ENCODE measurements at regions of chr1 and their contacts with region 1.

Region 1: DNA sequence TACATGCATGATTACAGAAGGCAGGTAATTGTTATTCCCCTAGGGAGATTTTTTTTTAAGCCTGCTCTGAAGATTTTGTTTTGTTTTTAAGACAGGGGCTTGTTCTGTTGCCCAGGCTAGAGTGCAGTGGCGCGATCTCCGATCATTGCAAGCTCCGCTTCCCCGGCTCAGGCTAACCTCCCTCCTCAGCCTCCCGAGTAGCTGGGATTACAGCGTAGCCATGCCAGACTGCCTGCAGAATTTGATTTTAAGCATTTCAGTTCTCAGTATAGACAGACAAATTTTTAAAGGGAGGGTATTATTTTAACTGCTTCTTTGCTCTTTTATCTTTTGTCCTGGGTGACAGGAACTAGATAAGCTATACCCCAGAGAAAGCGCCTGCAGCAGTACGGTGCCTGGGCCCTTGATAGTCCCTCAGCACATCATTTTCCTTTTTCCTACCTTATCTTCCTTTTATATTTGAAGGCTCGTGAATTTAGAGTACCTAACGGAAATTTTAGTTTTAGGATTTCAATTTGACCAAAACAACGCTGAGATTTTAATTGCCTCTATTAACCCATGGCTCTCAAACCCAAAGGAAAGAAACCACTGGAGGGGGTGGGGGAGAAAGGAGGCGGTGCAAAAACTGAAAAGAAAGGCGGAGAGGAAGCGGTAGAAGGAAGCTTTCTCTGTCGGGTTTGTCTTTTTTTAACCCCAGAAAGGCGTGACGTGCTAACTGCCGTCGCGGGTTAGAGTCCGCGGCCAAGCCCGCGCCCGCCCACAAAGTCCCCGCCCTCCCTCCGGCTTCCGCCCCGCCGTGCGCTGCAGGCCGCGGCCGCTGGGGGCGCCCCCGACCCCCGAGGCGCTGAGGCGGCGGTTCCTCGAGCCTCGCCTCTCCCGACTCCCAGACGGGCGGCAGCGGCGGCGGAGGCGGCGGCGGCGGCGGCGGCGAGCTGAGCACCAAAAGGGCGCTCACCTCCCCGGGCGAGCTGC is at the start of gene EEIG2:
- DNase-seq: peak; percentile 84 to 94 (median 91)
- ATAC-seq: peak; percentile 94
- H3K4me3 ChIP-seq: peak within 1 kb of the TSS; percentile 65
- H3K4me3 Mint-ChIP-seq: peak within 1 kb of the TSS in 9 of 10 donors; percentile 93 to 99 (median 96)
- H3K27ac ChIP-seq: peak within 1 kb of the TSS; percentile 68
- H3K27ac Mint-ChIP-seq: peak within 1 kb of the TSS; percentile 84 to 96 (median 91)
- H3K4me1 ChIP-seq: peaks cover 21 to 31% of the 10 kb centered on the region in 2 donors
- H3K4me1 Mint-ChIP-seq: peaks cover 22 to 38% (median 33%) of the 10 kb centered on the region in 7 donors
- H3K27me3 ChIP-seq: no peaks in the 10 kb centered on the region
- H3K27me3 Mint-ChIP-seq: peaks cover 0 to 10% (median 0%) of the 10 kb centered on the region in 5 donors
- total RNA-seq, gene EEIG2: 7.8 to 15.9 (median 10.9) TPM

Region 2: DNA sequence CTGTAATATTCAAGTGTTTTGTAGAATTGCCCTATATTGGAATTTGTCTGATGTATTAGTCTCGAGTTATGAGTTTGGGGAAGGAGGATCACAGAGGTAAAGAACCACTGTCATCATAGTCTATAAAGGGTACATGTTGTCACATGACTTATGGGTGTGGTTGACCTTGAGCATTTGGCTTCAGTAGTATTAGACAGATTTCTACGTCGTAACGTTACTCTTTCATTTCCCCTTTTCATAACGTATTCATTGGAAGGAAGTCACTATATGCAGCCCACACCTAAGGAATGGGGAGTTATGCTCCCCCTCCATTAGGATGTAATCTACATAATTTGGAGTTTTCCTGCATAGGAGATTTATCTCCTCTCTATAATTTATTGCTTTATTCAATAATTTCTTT is 484.4 kb before region 1 on chr1:
- CTCF ChIA-PET with region 1: no interaction called
- POLR2A ChIA-PET with region 1: no interaction called
- intact Hi-C with region 1: loop called in 1 of 2 experiments (anchors 5 kb)
- DNase-seq: no peak
- ATAC-seq: peak; percentile 58
- H3K4me3 ChIP-seq: no peak overlapping the region
- H3K4me3 Mint-ChIP-seq: no peak overlapping the region
- H3K27ac ChIP-seq: no peak overlapping the region
- H3K27ac Mint-ChIP-seq: peak overlapping the region in 2 of 9 donors; percentile 21 to 78
- H3K4me1 ChIP-seq: peaks cover 28 to 37% of the 10 kb centered on the region in 2 donors
- H3K4me1 Mint-ChIP-seq: peaks cover 24 to 60% (median 47%) of the 10 kb centered on the region in 7 donors
- H3K27me3 ChIP-seq: no peaks in the 10 kb centered on the region
- H3K27me3 Mint-ChIP-seq: no peaks in the 10 kb centered on the region

Region 3: GRCh38 chr1:108512239-108512981 is 47.1 kb before region 1 on chr1:
- CTCF ChIA-PET with region 1: interaction called, 99 read pairs
- POLR2A ChIA-PET with region 1: interaction called, 11 read pairs
- intact Hi-C with region 1: loop called (anchors 1 kb)
- DNase-seq: peak in 6 of 9 donors; percentile 27 to 58 (median 50)
- ATAC-seq: peak; percentile 85
- H3K4me3 ChIP-seq: no peak overlapping the region
- H3K4me3 Mint-ChIP-seq: no peak overlapping the region
- H3K27ac ChIP-seq: no peak overlapping the region
- H3K27ac Mint-ChIP-seq: no peak overlapping the region
- H3K4me1 ChIP-seq: no peaks in the 10 kb centered on the region
- H3K4me1 Mint-ChIP-seq: no peaks in the 10 kb centered on the region
- H3K27me3 ChIP-seq: no peaks in the 10 kb centered on the region
- H3K27me3 Mint-ChIP-seq: peaks cover 4 to 64% (median 12%) of the 10 kb centered on the region in 5 donors

Region 4: GRCh38 chr1:108643492-108644335 is 84.2 kb after region 1 on chr1:
- CTCF ChIA-PET with region 1: interaction called, 64 read pairs
- POLR2A ChIA-PET with region 1: interaction called, 53 read pairs
- intact Hi-C with region 1: loop called (anchors 1 kb)
- DNase-seq: peak in 7 of 9 donors; percentile 59 to 78 (median 67)
- ATAC-seq: peak; percentile 45
- H3K4me3 ChIP-seq: no peak overlapping the region
- H3K4me3 Mint-ChIP-seq: peak overlapping the region in 9 of 10 donors; percentile 4 to 70 (median 47)
- H3K27ac ChIP-seq: peak overlapping the region; percentile 71
- H3K27ac Mint-ChIP-seq: peak overlapping the region; percentile 68 to 100 (median 98)
- H3K4me1 ChIP-seq: peaks cover 49 to 52% of the 10 kb centered on the region in 2 donors
- H3K4me1 Mint-ChIP-seq: peaks cover 55 to 81% (median 75%) of the 10 kb centered on the region in 7 donors
- H3K27me3 ChIP-seq: no peaks in the 10 kb centered on the region
- H3K27me3 Mint-ChIP-seq: no peaks in the 10 kb centered on the region

Region 5: GRCh38 chr1:108746372-108747205 is 187.1 kb after region 1 on chr1 and contains the start of gene STXBP3:
- CTCF ChIA-PET with region 1: no interaction called
- POLR2A ChIA-PET with region 1: no interaction called
- intact Hi-C with region 1: loop called (anchors 1 to 2 kb)
- DNase-seq: peak; percentile 98 to 100 (median 99)
- ATAC-seq: peak; percentile 97
- H3K4me3 ChIP-seq: peak within 1 kb of the TSS; percentile 76
- H3K4me3 Mint-ChIP-seq: peak within 1 kb of the TSS; percentile 90 to 100 (median 97)
- H3K27ac ChIP-seq: peak within 1 kb of the TSS; percentile 98
- H3K27ac Mint-ChIP-seq: peak within 1 kb of the TSS; percentile 93 to 100 (median 98)
- H3K4me1 ChIP-seq: peaks cover 3 to 6% of the 10 kb centered on the region in 2 donors
- H3K4me1 Mint-ChIP-seq: peaks cover 26 to 47% (median 41%) of the 10 kb centered on the region in 7 donors
- H3K27me3 ChIP-seq: no peaks in the 10 kb centered on the region
- H3K27me3 Mint-ChIP-seq: peaks cover 0 to 5% (median 0%) of the 10 kb centered on the region in 5 donors
- total RNA-seq, gene STXBP3: 46.8 to 75.2 (median 54.0) TPM

Region 6: DNA sequence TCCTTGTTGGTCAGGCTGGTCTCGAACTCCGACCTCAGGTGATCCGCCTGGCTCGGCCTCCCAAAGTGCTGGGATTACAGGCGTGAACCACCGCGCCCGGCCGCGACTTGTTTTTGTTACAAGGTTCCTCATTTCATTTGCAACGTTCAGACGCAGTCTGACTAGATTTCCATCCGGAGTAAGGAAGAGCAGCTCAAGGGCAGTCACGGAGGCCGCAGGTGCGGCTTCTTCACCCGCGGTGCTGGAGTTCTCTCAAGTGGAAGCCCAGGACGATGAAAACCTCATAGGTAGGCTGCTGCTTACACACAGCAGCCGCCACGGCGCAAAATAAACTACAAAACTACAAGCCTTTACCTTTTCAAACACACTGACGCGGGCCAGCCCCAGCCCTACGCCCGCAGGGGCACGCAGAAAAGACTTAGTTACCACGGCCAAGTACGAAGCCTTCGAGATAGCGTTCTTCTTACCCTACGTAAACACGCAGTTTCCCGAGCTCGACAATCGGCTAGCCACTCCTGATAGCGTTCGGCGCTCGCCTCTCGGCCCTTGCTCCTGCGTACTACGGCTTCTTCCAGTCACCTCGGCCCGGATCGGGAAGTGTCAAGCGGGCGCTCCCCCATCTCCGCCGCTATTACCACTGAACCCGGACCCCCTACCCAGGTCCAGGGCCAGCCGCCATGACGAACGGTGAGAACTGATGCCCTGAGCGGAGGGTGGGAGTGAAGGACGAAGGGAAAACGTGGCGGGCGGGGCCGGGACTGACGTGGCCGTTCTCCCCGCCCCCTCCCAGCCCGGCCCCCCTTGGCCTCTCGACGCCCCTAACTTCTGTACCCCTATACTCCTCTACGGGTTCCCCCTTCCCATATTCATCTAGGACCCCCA is 530.9 kb after region 1 on chr1 and contains the start of gene TMEM167B:
- CTCF ChIA-PET with region 1: no interaction called
- POLR2A ChIA-PET with region 1: interaction called, 7 read pairs
- intact Hi-C with region 1: loop called in 1 of 2 experiments (anchors 5 kb)
- DNase-seq: peak; percentile 71 to 92 (median 87)
- ATAC-seq: peak; percentile 98
- H3K4me3 ChIP-seq: peak within 1 kb of the TSS; percentile 84
- H3K4me3 Mint-ChIP-seq: peak within 1 kb of the TSS; percentile 88 to 98 (median 96)
- H3K27ac ChIP-seq: peak within 1 kb of the TSS; percentile 97
- H3K27ac Mint-ChIP-seq: peak within 1 kb of the TSS; percentile 90 to 99 (median 98)
- H3K4me1 ChIP-seq: peaks cover 14 to 18% of the 10 kb centered on the region in 2 donors
- H3K4me1 Mint-ChIP-seq: peaks cover 15 to 43% (median 36%) of the 10 kb centered on the region in 7 donors
- H3K27me3 ChIP-seq: no peaks in the 10 kb centered on the region
- H3K27me3 Mint-ChIP-seq: no peaks in the 10 kb centered on the region
- total RNA-seq, gene TMEM167B: 33.2 to 65.6 (median 41.2) TPM